ENCODE measurements at regions of chr1 and their contacts with region 1.

Region 1: DNA sequence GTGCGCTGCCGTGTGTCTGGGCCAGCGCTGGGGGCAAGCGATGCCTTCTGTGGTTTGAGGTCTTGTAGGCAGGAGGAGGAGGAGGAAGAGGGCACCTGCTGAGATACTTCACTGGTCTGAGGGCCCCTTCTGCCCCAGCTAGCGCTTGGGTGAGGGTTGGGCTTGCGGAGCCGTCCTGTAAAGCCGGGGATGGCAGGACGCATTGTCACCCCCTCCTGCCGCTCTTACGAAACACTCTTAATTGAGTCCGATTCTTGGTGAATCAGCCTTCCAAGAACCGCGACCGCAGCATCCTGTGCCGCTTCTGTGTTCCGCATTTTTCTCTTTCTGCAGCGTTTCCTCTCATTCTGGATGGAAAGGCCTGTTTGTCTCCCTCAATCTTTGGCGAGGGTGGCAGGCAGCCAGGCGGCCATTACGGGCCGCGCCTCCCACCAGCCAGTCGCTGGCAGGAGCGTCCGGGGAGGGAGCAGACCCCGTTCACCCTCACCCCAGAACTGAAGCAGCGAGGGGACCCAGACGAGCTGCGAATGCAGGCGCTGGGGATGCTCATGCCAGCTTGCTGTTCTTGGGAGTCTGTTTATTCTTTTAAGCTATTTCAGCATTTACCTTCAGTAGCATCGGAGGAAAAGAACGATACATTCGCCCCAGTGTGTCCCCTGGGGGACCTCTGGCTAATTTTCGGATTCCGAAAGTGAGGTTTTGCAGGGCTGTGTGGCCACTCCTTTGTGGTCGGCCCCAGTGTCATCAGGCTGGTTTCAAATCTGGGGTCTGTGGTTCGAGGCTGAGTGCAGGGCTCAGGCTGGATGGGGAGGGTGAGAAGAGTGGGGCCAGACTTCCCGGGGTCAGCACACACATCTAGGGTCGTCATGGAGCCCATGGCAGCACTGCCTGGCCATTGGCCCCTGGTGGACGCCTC is 62.7 kb downstream of the SKI start:
- DNase-seq: peak; percentile 81
- ATAC-seq: peak; percentile 80
- H3K4me3 Mint-ChIP-seq: peak overlapping the region; percentile 81
- H3K27ac Mint-ChIP-seq: peak overlapping the region; percentile 95
- H3K4me1 Mint-ChIP-seq: peaks cover 53% of the 10 kb centered on the region
- H3K27me3 Mint-ChIP-seq: no peaks in the 10 kb centered on the region

Region 2: GRCh38 chr1:2205191-2205952 is 85.5 kb before region 1 on chr1:
- POLR2A ChIA-PET with region 1: no interaction called
- DNase-seq: peak; percentile 95
- ATAC-seq: peak; percentile 79
- H3K4me3 Mint-ChIP-seq: peak overlapping the region; percentile 69
- H3K27ac Mint-ChIP-seq: no peak overlapping the region
- H3K4me1 Mint-ChIP-seq: peaks cover 3% of the 10 kb centered on the region
- H3K27me3 Mint-ChIP-seq: no peaks in the 10 kb centered on the region

Region 3: GRCh38 chr1:2233997-2234761 is 56.7 kb before region 1 on chr1:
- POLR2A ChIA-PET with region 1: interaction called, 14 read pairs
- DNase-seq: peak; percentile 74
- ATAC-seq: peak; percentile 81
- H3K4me3 Mint-ChIP-seq: peak overlapping the region; percentile 83
- H3K27ac Mint-ChIP-seq: peak overlapping the region; percentile 88
- H3K4me1 Mint-ChIP-seq: peaks cover 55% of the 10 kb centered on the region
- H3K27me3 Mint-ChIP-seq: no peaks in the 10 kb centered on the region

Region 4: GRCh38 chr1:2267051-2267830 is 23.6 kb before region 1 on chr1:
- POLR2A ChIA-PET with region 1: no interaction called
- DNase-seq: no peak
- ATAC-seq: no peak
- H3K4me3 Mint-ChIP-seq: no peak overlapping the region
- H3K27ac Mint-ChIP-seq: no peak overlapping the region
- H3K4me1 Mint-ChIP-seq: peaks cover 15% of the 10 kb centered on the region
- H3K27me3 Mint-ChIP-seq: no peaks in the 10 kb centered on the region

Region 5: GRCh38 chr1:2429780-2430591 is 139.1 kb after region 1 on chr1:
- POLR2A ChIA-PET with region 1: no interaction called
- DNase-seq: no peak
- ATAC-seq: no peak
- H3K4me3 Mint-ChIP-seq: no peak overlapping the region
- H3K27ac Mint-ChIP-seq: no peak overlapping the region
- H3K4me1 Mint-ChIP-seq: no peaks in the 10 kb centered on the region
- H3K27me3 Mint-ChIP-seq: no peaks in the 10 kb centered on the region

Measured in activated naive CD8-positive, alpha-beta T cell treated with anti-CD3 and anti-CD28 coated beads, Interleukin-2, amount 10 ng/mL, durations not matched to agents 7 days and 5 days (primary cell).